Activated CD4-positive, alpha-beta T cell treated with anti-CD3 and anti-CD28 coated beads, Interleukin-2, amount 10 ng/mL, durations not matched to agents 24 days and 14 days (primary cell): ENCODE measurements at regions of chr10 and their contacts with region 1.

Region 1: DNA sequence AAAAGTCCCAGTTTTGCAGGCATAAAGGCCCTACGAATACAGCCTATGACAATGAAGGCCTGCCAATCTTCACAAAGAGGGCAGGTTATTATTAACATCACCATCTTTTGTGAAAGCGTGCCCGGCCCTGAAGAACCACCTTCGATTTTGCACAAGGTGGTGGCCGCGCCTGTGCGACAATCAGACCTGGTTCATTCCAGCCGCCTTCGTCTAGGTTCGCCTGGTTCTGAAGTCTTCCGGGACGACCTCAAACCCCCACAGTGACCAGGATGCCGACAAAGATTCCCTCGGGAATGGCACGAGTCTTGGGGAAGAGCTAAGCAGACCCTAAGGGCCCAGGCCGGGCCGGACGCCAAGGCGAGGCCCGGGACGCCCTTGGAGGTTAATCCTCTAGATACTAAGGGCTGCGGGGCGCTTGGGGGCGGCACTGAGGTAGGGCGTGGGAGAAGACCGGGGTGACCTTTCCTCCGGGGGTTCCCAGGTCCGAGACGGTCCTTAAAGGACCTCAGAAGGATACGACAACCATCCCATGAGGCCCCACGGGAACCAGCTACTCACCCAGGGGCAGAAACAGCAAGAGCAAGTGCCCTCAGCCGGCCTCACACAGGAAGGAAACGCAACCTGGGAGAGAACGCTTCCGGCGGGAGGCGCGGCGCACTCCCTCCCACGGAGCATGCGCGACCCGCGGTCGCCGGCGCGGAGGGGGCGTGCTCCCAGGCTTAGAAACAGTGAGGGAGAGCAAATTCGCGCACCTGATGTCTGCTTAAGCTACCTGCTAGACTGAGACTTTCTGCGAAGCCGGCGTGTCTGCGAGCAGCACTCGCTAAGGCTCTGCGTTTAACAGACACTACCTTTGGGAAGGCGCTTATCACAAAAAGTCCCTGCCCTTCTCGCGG is at the start of gene ATAD1:
- DNase-seq: peak; percentile 97
- H3K4me3 Mint-ChIP-seq: peak within 1 kb of the TSS; percentile 90
- H3K27ac Mint-ChIP-seq: peak within 1 kb of the TSS; percentile 98
- H3K4me1 Mint-ChIP-seq: peaks cover 27% of the 10 kb centered on the region
- H3K27me3 Mint-ChIP-seq: peaks cover 2% of the 10 kb centered on the region
- total RNA-seq, gene ATAD1: 54.1 and 55.5 TPM in 2 replicates

Region 2: DNA sequence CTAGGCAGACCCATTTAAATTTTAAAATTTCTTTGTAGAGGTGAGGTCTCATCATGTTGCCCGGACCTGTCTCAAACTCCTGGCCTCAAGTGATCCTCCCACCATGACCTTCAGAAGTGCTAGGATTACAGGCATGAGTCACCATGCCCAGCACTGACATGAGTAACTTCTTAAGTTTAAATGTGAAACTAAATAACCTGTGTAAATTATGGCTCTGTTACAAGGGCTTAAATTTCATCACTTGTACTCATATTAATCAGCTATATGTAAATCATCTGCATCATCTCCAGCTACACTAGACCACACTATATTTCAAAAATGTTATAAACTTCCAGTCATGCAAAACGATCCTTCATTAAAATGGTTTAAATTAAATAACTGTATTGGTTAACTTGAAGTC is 56.0 kb before region 1 on chr10:
- intact Hi-C with region 1: loop called (anchors 5 kb)
- DNase-seq: peak; percentile 70
- H3K4me3 Mint-ChIP-seq: no peak overlapping the region
- H3K27ac Mint-ChIP-seq: peak overlapping the region; percentile 78
- H3K4me1 Mint-ChIP-seq: peaks cover 16% of the 10 kb centered on the region
- H3K27me3 Mint-ChIP-seq: no peaks in the 10 kb centered on the region

Region 3: GRCh38 chr10:87829986-87830729 is 12.3 kb after region 1 on chr10:
- intact Hi-C with region 1: loop called (anchors 1 kb)
- DNase-seq: no peak
- H3K4me3 Mint-ChIP-seq: no peak overlapping the region
- H3K27ac Mint-ChIP-seq: no peak overlapping the region
- H3K4me1 Mint-ChIP-seq: peaks cover 8% of the 10 kb centered on the region
- H3K27me3 Mint-ChIP-seq: peaks cover 4% of the 10 kb centered on the region

Region 4: DNA sequence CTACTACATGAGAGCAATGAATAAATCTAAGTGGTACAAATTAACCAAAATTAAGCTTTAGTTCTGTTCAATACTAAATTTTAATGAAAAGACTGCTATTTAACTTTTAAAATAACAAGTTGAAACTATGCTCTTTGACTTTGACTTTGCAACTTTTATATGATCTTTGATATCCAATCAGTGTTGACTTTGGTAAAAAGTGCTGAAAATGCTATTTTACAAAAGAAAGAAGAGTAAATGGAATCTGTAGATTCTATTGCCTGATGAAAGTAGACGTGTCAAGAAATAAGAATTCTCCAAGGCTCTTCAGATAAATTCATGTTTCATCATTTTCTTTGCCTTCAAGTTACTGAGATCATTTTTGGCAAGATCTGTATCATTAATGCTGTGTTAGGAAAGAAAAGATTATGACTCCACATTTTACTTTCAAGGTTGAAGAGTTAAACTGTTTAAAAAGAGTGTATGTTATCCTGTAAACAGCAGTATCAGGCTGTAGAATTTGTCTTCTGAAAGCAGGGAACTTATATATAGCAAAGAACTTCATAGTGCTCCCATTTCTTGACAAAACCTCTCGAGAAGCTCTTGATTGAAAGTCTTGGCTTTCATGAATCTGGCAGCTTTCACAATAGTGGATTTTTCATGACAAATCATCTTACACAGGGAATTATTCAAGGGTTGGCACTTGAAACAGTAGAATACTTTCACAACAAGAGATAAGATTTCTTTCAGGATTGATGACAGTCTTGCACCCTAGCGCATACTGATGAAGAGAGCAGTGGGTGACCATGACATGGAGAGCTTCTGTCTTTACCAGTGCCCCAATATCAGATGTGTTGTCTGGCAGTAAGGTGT is 117.7 kb after region 1 on chr10:
- intact Hi-C with region 1: no loop called
- DNase-seq: no peak
- H3K4me3 Mint-ChIP-seq: no peak overlapping the region
- H3K27ac Mint-ChIP-seq: no peak overlapping the region
- H3K4me1 Mint-ChIP-seq: peaks cover 17% of the 10 kb centered on the region
- H3K27me3 Mint-ChIP-seq: no peaks in the 10 kb centered on the region

Region 5: DNA sequence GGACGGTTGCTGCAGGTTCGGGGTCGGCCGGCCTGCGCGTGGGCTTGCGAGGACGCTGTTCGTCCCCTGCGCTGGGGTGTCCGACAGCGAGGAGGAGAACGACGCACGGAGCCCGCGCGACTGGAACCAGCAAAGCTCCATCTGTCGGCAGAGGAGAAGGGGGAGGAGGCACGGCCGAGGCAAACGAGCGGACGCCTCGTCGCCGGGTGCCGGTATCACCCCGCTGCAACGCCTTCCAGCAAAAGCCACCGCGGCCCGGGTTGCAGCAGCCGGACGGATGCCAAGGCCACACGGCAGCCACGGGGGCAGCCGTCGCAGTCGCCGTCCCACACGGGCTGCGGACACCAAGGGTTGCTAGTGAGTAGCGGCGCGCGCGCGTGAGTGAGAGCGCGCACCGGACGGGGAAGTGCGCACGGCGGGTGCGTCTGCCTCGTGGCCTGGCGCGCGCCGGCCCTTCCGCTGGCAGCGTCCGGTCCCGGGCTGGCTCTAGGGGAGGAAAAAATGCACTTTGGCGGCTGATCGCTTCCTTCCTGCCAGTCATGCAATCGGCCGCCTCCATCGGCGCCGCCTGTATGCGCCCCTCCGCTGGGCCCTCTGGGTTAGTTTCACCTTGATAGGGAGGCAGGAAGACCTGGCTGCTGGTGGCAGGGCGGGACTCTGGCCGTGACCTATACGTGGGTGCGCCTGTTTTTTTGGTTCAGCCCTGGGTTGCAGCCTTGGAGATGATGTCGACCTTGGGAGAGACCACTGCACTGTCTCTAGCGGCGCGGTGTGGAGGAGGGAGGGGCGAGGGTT is 1062.6 kb after region 1 on chr10:
- intact Hi-C with region 1: loop called (anchors 5 kb)
- DNase-seq: peak; percentile 92
- H3K4me3 Mint-ChIP-seq: peak overlapping the region; percentile 96
- H3K27ac Mint-ChIP-seq: peak overlapping the region; percentile 99
- H3K4me1 Mint-ChIP-seq: peaks cover 59% of the 10 kb centered on the region
- H3K27me3 Mint-ChIP-seq: no peaks in the 10 kb centered on the region